Transverse colon (tissue), 4 donors: ENCODE measurements at regions of chr7 and their contacts with region 1.

Region 1: GRCh38 chr7:43834463-43835251 is 34.7 kb downstream of the MRPS24 start:
- DNase-seq: no peak
- H3K4me3 ChIP-seq: peak overlapping the region in 3 of 4 donors; percentile 5 to 32 (median 11)
- H3K27ac ChIP-seq: no peak overlapping the region
- H3K4me1 ChIP-seq: peaks cover 0 to 12% (median 2%) of the 10 kb centered on the region in 4 donors
- H3K27me3 ChIP-seq: peaks cover 3% of the 10 kb centered on the region
- CTCF ChIP-seq: no peak
- EP300 ChIP-seq: no peak
- POLR2A ChIP-seq: no peak

Region 2: DNA sequence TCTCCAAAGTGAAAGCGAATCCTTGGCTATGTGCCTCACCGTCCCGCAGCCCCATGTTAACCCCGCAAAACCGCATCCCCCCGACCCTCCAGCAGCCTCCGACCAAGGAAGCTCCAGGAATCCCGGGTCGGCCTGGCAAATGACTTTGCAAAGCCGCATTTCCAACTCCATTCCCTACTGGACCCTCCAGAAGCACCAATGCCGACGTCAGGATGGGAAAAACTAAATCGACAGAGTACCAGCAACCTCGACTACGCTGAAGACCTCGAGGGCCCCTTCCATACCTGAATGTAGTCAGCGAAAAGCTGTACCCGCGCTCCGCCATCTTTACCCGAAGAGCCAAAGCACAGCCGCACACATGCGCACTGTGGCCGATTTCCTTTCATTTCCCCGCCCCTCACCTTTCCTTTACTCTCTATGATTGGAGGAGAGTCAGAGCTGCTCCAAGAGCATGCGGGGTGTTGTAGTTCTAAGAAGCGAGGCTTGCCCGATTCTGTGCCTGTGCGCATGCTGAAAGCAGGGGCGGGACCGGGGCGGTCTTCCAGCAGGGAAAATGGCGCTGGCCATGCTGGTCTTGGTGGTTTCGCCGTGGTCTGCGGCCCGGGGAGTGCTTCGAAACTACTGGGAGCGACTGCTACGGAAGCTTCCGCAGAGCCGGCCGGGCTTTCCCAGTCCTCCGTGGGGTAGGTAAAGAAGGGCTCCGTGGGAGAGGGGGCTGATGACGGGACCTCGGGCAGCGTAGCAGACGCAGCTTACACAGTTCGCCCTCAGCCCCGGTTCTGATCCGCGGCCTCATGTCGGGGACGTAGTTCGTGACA is 902.6 kb before region 1 on chr7 and contains the starts of genes MRPL32 and PSMA2:
- in situ Hi-C with region 1: loop called in 2 of 4 experiments (anchors 10 to 25 kb)
- intact Hi-C with region 1: no loop called
- DNase-seq: peak; percentile 95
- H3K4me3 ChIP-seq: peak within 1 kb of the TSS; percentile 72 to 91 (median 88)
- H3K27ac ChIP-seq: peak within 1 kb of the TSS; percentile 83 to 91 (median 90)
- H3K4me1 ChIP-seq: peaks cover 21 to 55% (median 31%) of the 10 kb centered on the region in 4 donors
- H3K27me3 ChIP-seq: no peaks in the 10 kb centered on the region
- CTCF ChIP-seq: no peak
- EP300 ChIP-seq: no peak
- POLR2A ChIP-seq: peak; percentile 66
- total RNA-seq, gene MRPL32: 22.5 to 49.4 (median 36.4) TPM
- total RNA-seq, gene PSMA2: 5.8 to 61.2 (median 28.6) TPM

Region 3: GRCh38 chr7:43572516-43573049 is 262.1 kb before region 1 on chr7:
- in situ Hi-C with region 1: loop called in 3 of 4 experiments (anchors 25 kb)
- intact Hi-C with region 1: loop called (anchors 5 kb)
- DNase-seq: peak; percentile 25
- H3K4me3 ChIP-seq: no peak overlapping the region
- H3K27ac ChIP-seq: no peak overlapping the region
- H3K4me1 ChIP-seq: no peaks in the 10 kb centered on the region
- H3K27me3 ChIP-seq: no peaks in the 10 kb centered on the region
- CTCF ChIP-seq: no peak
- EP300 ChIP-seq: no peak
- POLR2A ChIP-seq: no peak

Region 4: DNA sequence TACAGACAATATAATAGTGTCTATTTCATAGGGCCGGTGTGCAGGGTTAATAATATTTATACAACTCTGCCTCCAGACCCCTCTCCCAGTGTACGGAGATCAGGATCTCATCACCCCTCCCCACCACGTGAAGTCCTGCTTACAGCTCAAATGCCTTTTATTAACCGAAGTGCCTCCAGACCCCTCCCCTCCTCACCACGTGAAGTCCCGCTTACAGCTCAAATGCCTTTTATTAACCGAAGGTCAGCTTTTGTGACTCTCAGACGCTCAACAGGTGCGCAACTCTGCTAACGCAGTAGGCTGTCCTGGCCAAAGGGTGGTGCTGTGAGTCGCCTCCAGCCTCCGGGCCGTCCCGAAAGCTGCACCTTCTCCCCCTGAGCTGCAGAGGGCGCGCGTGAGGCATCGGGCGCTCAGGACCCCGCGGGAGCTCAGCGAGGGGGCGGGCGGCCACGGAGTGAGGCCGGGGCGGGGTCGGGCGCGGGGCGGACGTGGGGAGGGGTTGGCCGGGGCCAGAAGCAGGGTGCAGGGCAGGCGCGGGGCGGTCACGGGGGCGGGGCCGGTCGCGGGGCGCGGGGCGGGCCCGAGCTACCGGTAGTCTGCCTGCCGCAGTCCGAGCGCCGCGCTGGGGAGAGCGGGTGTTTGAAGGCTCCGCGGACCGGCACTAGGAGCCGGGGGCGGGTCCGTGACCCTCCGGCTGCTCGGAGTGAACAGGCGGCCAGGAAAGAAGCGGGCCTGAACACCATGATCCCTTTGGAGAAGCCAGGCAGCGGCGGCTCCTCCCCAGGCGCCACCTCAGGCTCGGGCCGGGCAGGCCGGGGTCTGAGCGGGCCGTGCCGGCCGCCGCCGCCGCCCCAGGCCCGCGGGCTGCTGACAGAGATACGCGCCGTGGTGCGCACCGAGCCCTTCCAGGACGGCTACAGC is 251.9 kb before region 1 on chr7 and contains the start of gene STK17A:
- in situ Hi-C with region 1: loop called in 3 of 4 experiments (anchors 5 to 25 kb)
- intact Hi-C with region 1: loop called (anchors 2 kb)
- DNase-seq: peak; percentile 95
- H3K4me3 ChIP-seq: peak within 1 kb of the TSS; percentile 61 to 99 (median 74)
- H3K27ac ChIP-seq: peak within 1 kb of the TSS; percentile 91 to 99 (median 94)
- H3K4me1 ChIP-seq: peaks cover 9 to 39% (median 29%) of the 10 kb centered on the region in 4 donors
- H3K27me3 ChIP-seq: peaks cover 10% of the 10 kb centered on the region
- CTCF ChIP-seq: peak; percentile 99 to 100 (median 100)
- EP300 ChIP-seq: no peak
- POLR2A ChIP-seq: peak; percentile 85
- total RNA-seq, gene STK17A: 6.0 to 35.7 (median 26.4) TPM

Region 5: DNA sequence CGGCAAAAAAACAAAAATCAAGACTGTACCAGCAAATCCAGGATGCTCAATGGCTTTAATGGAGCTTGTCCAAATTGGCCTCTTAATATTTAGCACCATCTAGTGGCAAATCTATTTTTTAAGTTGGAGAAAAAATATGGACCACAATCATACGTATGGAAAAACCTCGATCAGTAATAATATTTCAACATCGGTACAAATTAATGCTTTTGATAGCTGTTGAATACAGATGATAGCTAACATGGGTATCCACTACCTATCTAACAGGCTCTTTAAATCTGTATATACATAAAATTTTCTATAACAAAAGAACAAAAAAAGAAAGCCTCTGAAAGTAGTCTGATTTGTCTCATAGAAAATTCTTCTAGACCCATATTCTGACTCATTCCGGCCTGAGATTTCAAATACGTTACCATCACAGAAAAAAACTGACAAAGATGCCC is 134.6 kb before region 1 on chr7:
- in situ Hi-C with region 1: loop called in 2 of 4 experiments (anchors 25 kb)
- intact Hi-C with region 1: no loop called
- DNase-seq: no peak
- H3K4me3 ChIP-seq: no peak overlapping the region
- H3K27ac ChIP-seq: no peak overlapping the region
- H3K4me1 ChIP-seq: peaks cover 0 to 9% (median 0%) of the 10 kb centered on the region in 4 donors
- H3K27me3 ChIP-seq: no peaks in the 10 kb centered on the region
- CTCF ChIP-seq: peak; percentile 63 to 82 (median 70)
- EP300 ChIP-seq: no peak
- POLR2A ChIP-seq: no peak

Region 6: GRCh38 chr7:43729214-43729923 is 105.3 kb before region 1 on chr7 and contains the start of gene COA1:
- in situ Hi-C with region 1: loop called (anchors 10 to 25 kb)
- intact Hi-C with region 1: loop called (anchors 10 kb)
- DNase-seq: peak; percentile 88
- H3K4me3 ChIP-seq: peak within 1 kb of the TSS; percentile 17 to 82 (median 60)
- H3K27ac ChIP-seq: peak within 1 kb of the TSS; percentile 82 to 88 (median 86)
- H3K4me1 ChIP-seq: peaks cover 0 to 41% (median 14%) of the 10 kb centered on the region in 4 donors
- H3K27me3 ChIP-seq: no peaks in the 10 kb centered on the region
- CTCF ChIP-seq: peak in 3 of 5 experiments; percentile 16 to 41 (median 20)
- EP300 ChIP-seq: no peak
- POLR2A ChIP-seq: peak; percentile 55
- total RNA-seq, gene COA1: 31.8 to 53.2 (median 39.8) TPM

Region 7: GRCh38 chr7:43735802-43736541 is 98.7 kb before region 1 on chr7:
- in situ Hi-C with region 1: loop called in 2 of 4 experiments (anchors 10 to 25 kb)
- intact Hi-C with region 1: no loop called
- DNase-seq: no peak
- H3K4me3 ChIP-seq: no peak overlapping the region
- H3K27ac ChIP-seq: no peak overlapping the region
- H3K4me1 ChIP-seq: no peaks in the 10 kb centered on the region
- H3K27me3 ChIP-seq: no peaks in the 10 kb centered on the region
- CTCF ChIP-seq: no peak
- EP300 ChIP-seq: no peak
- POLR2A ChIP-seq: no peak